ENCODE measurements at regions of chr7 and their contacts with region 1.

Region 1: GRCh38 chr7:131538071-131538790 is 18.2 kb downstream of the PODXL start:
- DNase-seq: peak; percentile 72
- ATAC-seq: peak; percentile 84
- H3K4me3 ChIP-seq: peak overlapping the region in 1 of 2 experiments; percentile 27; a peak in 2 of 4 replicates
- H3K27ac ChIP-seq: peak overlapping the region; percentile 95
- H3K4me1 ChIP-seq: peaks cover 67 to 71% of the 10 kb centered on the region in 2 experiments
- H3K27me3 ChIP-seq: no peaks in the 10 kb centered on the region
- CTCF ChIP-seq: no peak
- POLR2A ChIP-seq: no peak
- RAD21 ChIP-seq: no peak

Region 2: DNA sequence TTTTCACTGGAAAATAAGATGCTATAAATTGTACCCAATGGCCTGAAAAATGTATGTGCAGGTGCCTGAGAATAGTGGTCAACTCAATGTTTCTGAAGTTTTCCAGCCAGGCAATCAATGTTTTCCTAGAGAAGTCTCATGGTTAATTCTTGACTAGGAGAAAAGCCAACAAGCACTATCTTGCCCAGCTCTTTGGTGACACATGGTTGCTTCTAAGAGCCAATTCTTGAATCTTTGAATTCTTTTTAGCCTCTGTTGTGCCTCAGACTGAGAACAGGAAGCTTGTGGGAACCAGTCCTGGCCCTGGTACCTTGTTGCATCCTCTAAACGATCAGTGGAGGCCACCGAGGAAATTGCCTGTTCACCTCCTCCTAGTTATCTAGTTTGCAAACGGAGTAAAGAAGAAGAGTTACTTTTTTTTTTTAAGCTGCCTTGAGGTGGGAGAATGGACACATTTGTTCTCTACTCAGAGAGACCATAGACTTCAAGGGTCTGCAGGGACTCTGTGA is 354.6 kb before region 1 on chr7:
- CTCF ChIA-PET with region 1: no interaction called
- POLR2A ChIA-PET with region 1: no interaction called
- RAD21 ChIA-PET with region 1: no interaction called
- intact Hi-C with region 1: no loop called
- DNase-seq: no peak
- ATAC-seq: no peak
- H3K4me3 ChIP-seq: no peak overlapping the region
- H3K27ac ChIP-seq: no peak overlapping the region
- H3K4me1 ChIP-seq: peaks cover 16 to 22% of the 10 kb centered on the region in 2 experiments
- H3K27me3 ChIP-seq: no peaks in the 10 kb centered on the region
- CTCF ChIP-seq: no peak
- POLR2A ChIP-seq: no peak
- RAD21 ChIP-seq: no peak

Region 3: DNA sequence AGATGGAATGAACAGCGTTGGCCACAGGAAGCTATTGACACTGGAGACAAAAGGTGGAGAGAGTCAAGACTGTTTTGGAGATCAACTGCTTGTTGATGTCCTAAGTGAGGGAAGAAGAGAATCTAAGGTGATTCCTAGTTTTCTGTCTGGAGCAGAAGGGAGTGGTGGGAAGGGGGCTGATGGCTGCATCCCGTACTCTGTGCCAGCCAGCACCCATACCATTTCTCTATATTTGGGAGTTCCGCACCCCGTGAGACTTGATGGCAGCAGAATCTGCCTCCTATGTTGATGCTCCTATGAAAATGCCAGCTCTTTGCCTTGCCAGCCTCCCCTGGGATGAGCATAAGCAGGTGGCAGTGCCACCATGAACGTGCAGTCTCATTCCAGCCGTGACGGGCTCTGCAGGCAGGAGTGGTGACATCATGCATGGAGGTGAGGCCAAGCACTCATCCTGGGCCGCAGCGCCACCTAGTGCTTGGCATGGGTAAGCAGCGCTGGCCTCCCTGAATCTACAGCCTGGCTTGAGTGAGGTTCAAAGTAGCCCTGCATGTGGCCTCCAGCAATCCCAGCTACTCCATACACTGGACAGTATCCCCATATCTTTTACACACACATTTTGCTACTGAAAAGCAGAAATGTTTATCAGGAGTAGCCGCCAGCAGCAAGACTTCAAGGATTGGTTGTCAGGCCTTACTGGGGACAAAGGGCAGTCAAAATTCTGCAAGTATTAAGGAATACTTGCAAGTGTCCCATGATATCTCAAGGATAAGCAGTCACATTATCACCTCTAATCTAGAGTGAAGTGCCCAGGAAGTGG is 24.8 kb before region 1 on chr7:
- CTCF ChIA-PET with region 1: interaction called, 3 read pairs
- POLR2A ChIA-PET with region 1: no interaction called
- RAD21 ChIA-PET with region 1: no interaction called
- intact Hi-C with region 1: loop called (anchors 1 kb)
- DNase-seq: peak; percentile 75
- ATAC-seq: peak; percentile 99
- H3K4me3 ChIP-seq: no peak overlapping the region
- H3K27ac ChIP-seq: peak overlapping the region; percentile 13; the same call in 1 of the 2 replicates
- H3K4me1 ChIP-seq: peaks cover 11 to 17% of the 10 kb centered on the region in 2 experiments
- H3K27me3 ChIP-seq: no peaks in the 10 kb centered on the region
- CTCF ChIP-seq: peak; percentile 73 to 99 (median 95)
- POLR2A ChIP-seq: no peak
- RAD21 ChIP-seq: peak; percentile 86